Activated naive CD8-positive, alpha-beta T cell treated with anti-CD3 and anti-CD28 coated beads, Interleukin-2, amount 10 ng/mL, durations not matched to agents 7 days and 5 days (primary cell): ENCODE measurements at regions of chr10 and their contacts with region 1.

Region 1: GRCh38 chr10:97849687-97850402 is at the start of gene GOLGA7B:
- DNase-seq: peak; percentile 85
- ATAC-seq: peak; percentile 82
- H3K4me3 Mint-ChIP-seq: peak within 1 kb of the TSS; percentile 88
- H3K27ac Mint-ChIP-seq: peak within 1 kb of the TSS; percentile 89
- H3K4me1 Mint-ChIP-seq: peaks cover 36% of the 10 kb centered on the region
- H3K27me3 Mint-ChIP-seq: no peaks in the 10 kb centered on the region
- total RNA-seq, gene GOLGA7B: 10.8 to 12.0 TPM

Region 2: GRCh38 chr10:97780841-97781617 is 68.8 kb before region 1 on chr10:
- POLR2A ChIA-PET with region 1: interaction called, 12 read pairs
- DNase-seq: no peak
- ATAC-seq: no peak
- H3K4me3 Mint-ChIP-seq: peak overlapping the region; percentile 71
- H3K27ac Mint-ChIP-seq: peak overlapping the region; percentile 89
- H3K4me1 Mint-ChIP-seq: peaks cover 27% of the 10 kb centered on the region
- H3K27me3 Mint-ChIP-seq: peaks cover 1% of the 10 kb centered on the region

Region 3: GRCh38 chr10:97792141-97792721 is 57.6 kb before region 1 on chr10:
- POLR2A ChIA-PET with region 1: interaction called, 48 read pairs
- DNase-seq: peak; percentile 78
- ATAC-seq: peak; percentile 35
- H3K4me3 Mint-ChIP-seq: no peak overlapping the region
- H3K27ac Mint-ChIP-seq: peak overlapping the region; percentile 80
- H3K4me1 Mint-ChIP-seq: peaks cover 27% of the 10 kb centered on the region
- H3K27me3 Mint-ChIP-seq: no peaks in the 10 kb centered on the region

Region 4: DNA sequence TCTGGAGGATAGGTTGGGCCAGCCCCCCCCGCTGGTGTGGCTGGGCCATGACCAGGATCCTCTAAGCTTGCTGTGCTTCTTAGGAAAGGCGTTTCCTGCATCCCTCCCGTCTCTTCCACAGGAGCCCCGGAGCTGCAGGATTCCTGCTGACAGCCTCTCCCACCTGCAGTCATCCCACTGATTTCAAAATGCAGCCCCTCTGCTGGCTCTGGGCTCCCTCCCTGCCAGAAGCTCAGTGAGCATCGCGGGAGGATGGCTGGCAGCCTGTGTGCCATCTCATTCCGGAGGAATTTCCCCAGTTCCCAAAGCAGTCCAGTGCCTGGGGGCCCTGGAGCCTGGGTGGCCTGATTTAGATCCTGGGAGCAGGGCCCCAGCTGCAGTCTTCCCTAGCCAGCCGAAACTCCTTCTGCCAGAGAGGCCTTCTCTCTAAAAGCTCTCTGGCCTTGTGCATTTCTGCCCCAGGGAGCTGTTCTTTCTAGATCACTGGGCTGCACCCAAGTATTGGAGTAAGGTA is 22.0 kb before region 1 on chr10:
- POLR2A ChIA-PET with region 1: interaction called, 12 read pairs
- DNase-seq: no peak
- ATAC-seq: no peak
- H3K4me3 Mint-ChIP-seq: no peak overlapping the region
- H3K27ac Mint-ChIP-seq: peak overlapping the region; percentile 51
- H3K4me1 Mint-ChIP-seq: peaks cover 20% of the 10 kb centered on the region
- H3K27me3 Mint-ChIP-seq: no peaks in the 10 kb centered on the region

Region 5: DNA sequence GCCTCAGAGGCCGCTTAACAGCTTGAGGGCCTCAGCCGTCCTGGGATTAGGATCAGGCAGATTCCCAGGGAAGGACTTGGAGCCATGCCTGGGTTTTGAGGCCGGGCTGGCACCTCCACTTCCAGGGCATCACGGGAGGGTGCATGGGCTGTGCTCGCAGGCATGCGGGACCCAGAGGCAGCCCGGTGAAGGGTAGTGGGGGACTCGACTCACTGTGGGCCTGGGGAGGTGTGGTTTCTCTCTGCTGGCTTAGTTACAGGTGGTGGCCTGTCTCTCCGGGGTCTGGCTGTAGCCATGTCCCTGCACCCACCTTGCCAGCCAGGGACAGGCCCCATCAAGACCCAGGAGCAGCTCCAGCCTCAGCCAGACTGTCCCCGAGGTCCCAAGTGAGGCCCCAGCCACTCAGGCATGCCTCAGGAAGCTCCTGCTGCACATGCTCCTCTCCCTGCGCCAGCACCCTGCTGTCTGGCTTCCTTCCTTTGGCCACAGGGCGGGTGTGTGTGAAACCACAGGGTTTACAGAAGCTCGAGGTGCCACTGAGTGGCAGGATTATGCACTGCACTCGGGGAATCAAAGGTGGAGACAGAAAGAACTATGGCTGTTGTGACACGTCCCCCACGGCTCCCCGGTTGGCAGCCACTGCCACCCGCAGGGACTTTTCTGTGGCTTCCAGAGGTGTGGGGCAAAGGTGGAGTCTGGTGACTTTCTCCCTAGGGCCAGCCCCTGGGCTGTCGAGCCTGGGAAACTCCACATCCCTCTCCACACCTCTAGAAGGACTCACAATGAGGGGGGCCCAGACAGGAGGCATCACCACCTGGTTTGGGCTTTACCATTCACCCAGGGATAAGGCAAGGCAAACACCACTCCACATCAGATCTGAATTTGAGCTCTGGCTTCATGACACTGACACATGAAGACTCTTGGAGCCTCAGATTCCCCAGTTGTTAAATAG is 19.5 kb after region 1 on chr10:
- POLR2A ChIA-PET with region 1: interaction called, 17 read pairs
- DNase-seq: peak; percentile 83
- ATAC-seq: peak; percentile 99
- H3K4me3 Mint-ChIP-seq: peak overlapping the region; percentile 64
- H3K27ac Mint-ChIP-seq: peak overlapping the region; percentile 78
- H3K4me1 Mint-ChIP-seq: peaks cover 10% of the 10 kb centered on the region
- H3K27me3 Mint-ChIP-seq: peaks cover 11% of the 10 kb centered on the region

Region 6: GRCh38 chr10:98141484-98142073 is 291.7 kb after region 1 on chr10:
- POLR2A ChIA-PET with region 1: no interaction called
- DNase-seq: no peak
- ATAC-seq: no peak
- H3K4me3 Mint-ChIP-seq: no peak overlapping the region
- H3K27ac Mint-ChIP-seq: no peak overlapping the region
- H3K4me1 Mint-ChIP-seq: peaks cover 30% of the 10 kb centered on the region
- H3K27me3 Mint-ChIP-seq: no peaks in the 10 kb centered on the region